ENCODE measurements at regions of chr1 and their contacts with region 1.

Region 1: DNA sequence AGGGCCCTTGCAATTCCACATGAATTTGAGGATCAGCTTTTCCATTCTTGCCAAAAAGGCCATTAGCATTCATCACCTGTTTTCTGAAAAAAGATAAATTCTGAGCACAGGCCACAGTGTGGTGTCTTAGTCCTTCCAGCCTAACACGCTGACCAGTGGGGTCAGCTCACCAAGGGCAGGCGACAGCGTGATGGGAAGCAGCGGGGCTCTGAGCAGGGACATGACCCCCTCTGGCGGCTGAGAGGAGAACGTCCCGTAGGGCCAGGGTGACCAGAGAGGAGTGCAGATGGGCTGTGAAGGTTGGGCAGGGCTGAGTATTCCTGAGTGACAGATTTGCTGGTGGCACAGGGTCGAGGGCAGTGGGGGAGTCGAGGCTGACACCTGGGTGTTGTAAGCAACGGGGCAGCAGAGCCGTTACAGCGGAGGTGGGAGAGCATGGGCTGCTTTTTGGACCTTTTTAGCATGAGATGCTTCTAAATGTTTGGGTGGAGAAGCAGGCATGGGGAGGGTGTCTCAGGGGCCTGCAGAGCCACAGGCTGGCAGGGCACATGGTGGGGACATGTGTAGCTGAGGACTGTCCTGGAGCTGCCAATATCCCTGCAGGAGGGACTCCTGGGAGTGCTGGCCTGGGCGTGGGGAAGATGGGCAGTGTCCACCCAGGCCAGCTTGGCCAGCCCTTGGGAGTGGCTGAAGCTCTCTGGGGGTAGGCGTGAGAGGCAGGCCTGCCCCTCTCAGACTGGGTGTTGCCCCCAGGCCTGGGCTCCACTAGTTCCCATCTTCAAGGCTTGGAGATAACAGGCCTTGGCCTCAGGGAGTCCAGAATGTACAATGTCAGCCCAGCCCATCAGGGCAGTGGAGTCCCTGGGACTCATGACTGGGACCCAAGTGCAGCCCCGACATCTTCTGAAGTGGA is 8.6 kb upstream of the CALML6 start:
- DNase-seq: peak; percentile 88 to 92 (median 91)
- ATAC-seq: peak; percentile 71 to 79 (median 72)
- H3K4me3 ChIP-seq: no peak overlapping the region
- H3K27ac ChIP-seq: no peak overlapping the region
- H3K4me1 ChIP-seq: peaks cover 3 to 18% (median 4%) of the 10 kb centered on the region in 4 donors
- H3K27me3 ChIP-seq: no peaks in the 10 kb centered on the region
- CTCF ChIP-seq: peak; percentile 89 to 93 (median 93)
- POLR2A ChIP-seq: no peak

Region 2: GRCh38 chr1:1758692-1759455 is 147.6 kb before region 1 on chr1:
- intact Hi-C with region 1: loop called (anchors 5 to 10 kb)
- DNase-seq: peak; percentile 95 to 99 (median 98)
- ATAC-seq: peak; percentile 75 to 85 (median 78)
- H3K4me3 ChIP-seq: peak overlapping the region in 2 of 3 donors; percentile 47 to 56
- H3K27ac ChIP-seq: peak overlapping the region; percentile 71 to 95 (median 92)
- H3K4me1 ChIP-seq: peaks cover 0 to 54% (median 19%) of the 10 kb centered on the region in 4 donors
- H3K27me3 ChIP-seq: no peaks in the 10 kb centered on the region
- CTCF ChIP-seq: no peak
- POLR2A ChIP-seq: peak; percentile 66

Region 3: DNA sequence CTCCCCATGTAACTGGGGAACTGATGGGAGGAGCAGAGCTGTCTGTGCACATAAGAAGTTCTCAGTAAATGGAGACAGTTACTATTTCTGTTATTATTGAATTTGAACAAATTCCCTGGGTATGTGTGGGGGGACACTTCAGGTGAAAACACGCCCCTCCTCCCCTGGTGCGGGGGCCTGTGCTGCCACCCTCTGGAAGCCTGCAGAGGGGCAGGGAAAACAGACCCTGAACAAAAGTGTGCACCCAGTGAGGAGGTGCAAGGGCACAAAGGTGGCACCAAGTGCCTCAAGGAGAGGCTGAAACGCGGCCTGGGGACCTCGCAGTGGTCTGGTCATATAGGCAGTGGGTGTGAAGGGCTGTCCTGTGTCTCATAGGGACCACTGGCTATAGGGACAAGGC is 110.0 kb before region 1 on chr1:
- intact Hi-C with region 1: loop called in 1 of 2 experiments (anchors 10 kb)
- DNase-seq: peak in 1 of 3 donors; percentile 46
- ATAC-seq: peak; percentile 48 to 56 (median 56)
- H3K4me3 ChIP-seq: no peak overlapping the region
- H3K27ac ChIP-seq: no peak overlapping the region
- H3K4me1 ChIP-seq: no peaks in the 10 kb centered on the region
- H3K27me3 ChIP-seq: no peaks in the 10 kb centered on the region
- CTCF ChIP-seq: peak in 3 of 4 donors; percentile 15 to 39 (median 35)
- POLR2A ChIP-seq: no peak

Region 4: GRCh38 chr1:1873186-1873585 is 33.3 kb before region 1 on chr1:
- intact Hi-C with region 1: no loop called
- DNase-seq: peak in 2 of 3 donors; percentile 80 to 85
- ATAC-seq: peak; percentile 55 to 93 (median 74)
- H3K4me3 ChIP-seq: no peak overlapping the region
- H3K27ac ChIP-seq: no peak overlapping the region
- H3K4me1 ChIP-seq: peaks cover 0 to 32% (median 13%) of the 10 kb centered on the region in 4 donors
- H3K27me3 ChIP-seq: no peaks in the 10 kb centered on the region
- CTCF ChIP-seq: no peak
- POLR2A ChIP-seq: no peak